Activated CD8-positive, alpha-beta memory T cell treated with anti-CD3 and anti-CD28 coated beads, Interleukin-2, amount 10 ng/mL, durations not matched to agents 7 days and 5 days (primary cell): ENCODE measurements at regions of chr11 and their contacts with region 1.

Region 1: DNA sequence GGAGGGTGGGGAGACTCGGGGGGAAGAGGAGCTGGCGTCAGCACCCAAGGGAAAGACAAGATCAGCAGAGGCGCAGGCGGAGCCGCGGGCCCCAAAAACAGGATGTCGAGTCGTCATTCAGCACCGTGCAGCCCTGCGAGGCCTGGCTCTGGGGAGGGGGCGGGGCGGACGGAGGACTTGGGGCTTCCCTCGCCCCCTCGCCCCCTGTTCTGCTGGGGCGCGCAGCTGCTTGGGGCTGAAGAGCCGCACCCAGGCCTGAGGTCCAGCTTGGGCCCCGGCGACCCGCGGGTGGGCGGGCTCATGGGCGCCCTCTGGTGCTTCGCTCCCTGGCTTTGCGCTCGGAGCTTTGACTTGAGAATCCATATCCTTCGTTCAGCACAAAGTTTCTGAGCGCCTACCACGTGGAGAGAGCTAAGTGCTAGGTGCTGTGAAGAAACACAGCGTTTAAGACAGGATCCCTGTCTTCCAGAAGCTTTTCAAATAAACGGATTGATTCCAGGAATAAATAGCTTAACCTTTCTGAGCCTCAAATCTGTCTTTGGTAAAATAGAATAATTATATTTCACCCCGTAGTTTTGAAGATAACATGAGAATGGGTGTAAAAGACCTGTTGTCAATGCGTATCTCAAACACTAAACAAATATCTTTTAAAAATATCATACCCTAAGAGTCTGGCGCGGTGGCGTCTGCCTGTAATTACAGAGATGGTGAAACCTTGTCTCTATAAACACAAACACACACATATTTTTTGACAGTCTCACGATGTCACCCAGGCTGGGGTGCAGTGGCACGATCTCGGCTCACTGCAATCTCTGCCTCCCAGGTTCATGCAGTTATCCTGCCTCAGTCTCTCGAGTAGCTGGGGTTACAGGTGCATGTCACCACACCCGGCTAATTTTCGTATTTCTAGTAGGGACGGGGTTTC is 929 bp upstream of the RHOG start:
- DNase-seq: peak; percentile 95
- ATAC-seq: peak; percentile 76
- H3K4me3 Mint-ChIP-seq: peak overlapping the region; percentile 92
- H3K27ac Mint-ChIP-seq: peak overlapping the region; percentile 96
- H3K4me1 Mint-ChIP-seq: peaks cover 42% of the 10 kb centered on the region
- H3K27me3 Mint-ChIP-seq: no peaks in the 10 kb centered on the region

Region 2: GRCh38 chr11:3824714-3825472 is 16.8 kb before region 1 on chr11:
- CTCF ChIA-PET with region 1: interaction called, 26 read pairs
- DNase-seq: peak; percentile 90
- ATAC-seq: peak; percentile 94
- H3K4me3 Mint-ChIP-seq: no peak overlapping the region
- H3K27ac Mint-ChIP-seq: peak overlapping the region; percentile 3
- H3K4me1 Mint-ChIP-seq: peaks cover 20% of the 10 kb centered on the region
- H3K27me3 Mint-ChIP-seq: no peaks in the 10 kb centered on the region

Region 3: GRCh38 chr11:3880724-3881123 is 39.0 kb after region 1 on chr11:
- CTCF ChIA-PET with region 1: no interaction called
- DNase-seq: no peak
- ATAC-seq: no peak
- H3K4me3 Mint-ChIP-seq: no peak overlapping the region
- H3K27ac Mint-ChIP-seq: peak overlapping the region; percentile 26
- H3K4me1 Mint-ChIP-seq: peaks cover 50% of the 10 kb centered on the region
- H3K27me3 Mint-ChIP-seq: no peaks in the 10 kb centered on the region

Region 4: GRCh38 chr11:3894128-3894731 is 52.5 kb after region 1 on chr11:
- CTCF ChIA-PET with region 1: no interaction called
- DNase-seq: peak; percentile 54
- ATAC-seq: peak; percentile 60
- H3K4me3 Mint-ChIP-seq: no peak overlapping the region
- H3K27ac Mint-ChIP-seq: peak overlapping the region; percentile 73
- H3K4me1 Mint-ChIP-seq: peaks cover 31% of the 10 kb centered on the region
- H3K27me3 Mint-ChIP-seq: no peaks in the 10 kb centered on the region

Region 5: GRCh38 chr11:4065601-4066377 is 224.1 kb after region 1 on chr11:
- CTCF ChIA-PET with region 1: interaction called, 474 read pairs
- DNase-seq: no peak
- ATAC-seq: no peak
- H3K4me3 Mint-ChIP-seq: no peak overlapping the region
- H3K27ac Mint-ChIP-seq: no peak overlapping the region
- H3K4me1 Mint-ChIP-seq: peaks cover 43% of the 10 kb centered on the region
- H3K27me3 Mint-ChIP-seq: no peaks in the 10 kb centered on the region